ENCODE measurements at regions of chr1 and their contacts with region 1.

Region 1: DNA sequence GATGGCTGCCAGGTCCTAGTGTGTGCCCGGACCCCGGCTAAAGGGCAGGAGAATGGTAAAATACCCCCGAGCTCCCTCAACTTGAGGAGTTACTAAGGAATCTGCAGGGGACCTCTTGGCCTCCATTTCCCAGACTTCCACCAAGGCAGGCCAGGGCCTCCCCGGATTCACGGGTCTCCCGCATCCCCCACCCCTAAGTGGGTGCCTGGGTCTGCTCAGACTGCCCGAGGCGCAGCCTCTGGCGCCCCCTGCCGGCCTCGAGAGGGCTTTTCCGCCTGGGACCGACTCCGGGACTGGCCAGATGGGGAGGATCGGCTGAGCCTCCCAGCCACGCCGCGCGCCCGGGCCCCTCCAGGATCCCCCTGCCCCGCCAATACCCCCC is 1.7 kb downstream of the PLEKHG5 start:
- DNase-seq: peak; percentile 15
- ATAC-seq: peak; percentile 86
- H3K4me3 ChIP-seq: peak overlapping the region; percentile 89
- H3K27ac ChIP-seq: peak overlapping the region; percentile 69
- H3K4me1 ChIP-seq: no peaks in the 10 kb centered on the region
- H3K27me3 ChIP-seq: peaks cover 0 to under 1% of the 10 kb centered on the region in 2 experiments; a peak in 3 of 4 replicates
- CTCF ChIP-seq: peak; percentile 88 to 97 (median 94)
- EP300 ChIP-seq: no peak
- POLR2A ChIP-seq: no peak
- RAD21 ChIP-seq: peak; percentile 55

Region 2: GRCh38 chr1:6475381-6476133 is 14.2 kb before region 1 on chr1:
- CTCF ChIA-PET with region 1: interaction called, 17 read pairs
- POLR2A ChIA-PET with region 1: interaction called, 5 read pairs
- RAD21 ChIA-PET with region 1: interaction called, 3 read pairs
- SMC1A ChIA-PET with region 1: no interaction called
- in situ Hi-C with region 1: no loop called
- intact Hi-C with region 1: no loop called
- DNase-seq: no peak
- ATAC-seq: peak; percentile 97
- H3K4me3 ChIP-seq: no peak overlapping the region
- H3K27ac ChIP-seq: no peak overlapping the region
- H3K4me1 ChIP-seq: no peaks in the 10 kb centered on the region
- H3K27me3 ChIP-seq: no peaks in the 10 kb centered on the region
- CTCF ChIP-seq: peak; percentile 86 to 95 (median 94)
- EP300 ChIP-seq: no peak
- POLR2A ChIP-seq: no peak
- RAD21 ChIP-seq: peak; percentile 48

Region 3: GRCh38 chr1:6523566-6523965 is 33.8 kb after region 1 on chr1:
- CTCF ChIA-PET with region 1: interaction called, 24 read pairs
- POLR2A ChIA-PET with region 1: interaction called, 5 read pairs
- RAD21 ChIA-PET with region 1: no interaction called
- SMC1A ChIA-PET with region 1: interaction called, 3 read pairs
- in situ Hi-C with region 1: no loop called
- intact Hi-C with region 1: no loop called
- DNase-seq: no peak
- ATAC-seq: peak; percentile 71
- H3K4me3 ChIP-seq: no peak overlapping the region
- H3K27ac ChIP-seq: no peak overlapping the region
- H3K4me1 ChIP-seq: no peaks in the 10 kb centered on the region
- H3K27me3 ChIP-seq: no peaks in the 10 kb centered on the region
- CTCF ChIP-seq: peak; percentile 31 to 47 (median 35); a peak in 4 of 6 replicates
- EP300 ChIP-seq: no peak
- POLR2A ChIP-seq: no peak
- RAD21 ChIP-seq: 0 out of 2 replicates have a peak, but pooled peaks have one; percentile 23

Region 4: DNA sequence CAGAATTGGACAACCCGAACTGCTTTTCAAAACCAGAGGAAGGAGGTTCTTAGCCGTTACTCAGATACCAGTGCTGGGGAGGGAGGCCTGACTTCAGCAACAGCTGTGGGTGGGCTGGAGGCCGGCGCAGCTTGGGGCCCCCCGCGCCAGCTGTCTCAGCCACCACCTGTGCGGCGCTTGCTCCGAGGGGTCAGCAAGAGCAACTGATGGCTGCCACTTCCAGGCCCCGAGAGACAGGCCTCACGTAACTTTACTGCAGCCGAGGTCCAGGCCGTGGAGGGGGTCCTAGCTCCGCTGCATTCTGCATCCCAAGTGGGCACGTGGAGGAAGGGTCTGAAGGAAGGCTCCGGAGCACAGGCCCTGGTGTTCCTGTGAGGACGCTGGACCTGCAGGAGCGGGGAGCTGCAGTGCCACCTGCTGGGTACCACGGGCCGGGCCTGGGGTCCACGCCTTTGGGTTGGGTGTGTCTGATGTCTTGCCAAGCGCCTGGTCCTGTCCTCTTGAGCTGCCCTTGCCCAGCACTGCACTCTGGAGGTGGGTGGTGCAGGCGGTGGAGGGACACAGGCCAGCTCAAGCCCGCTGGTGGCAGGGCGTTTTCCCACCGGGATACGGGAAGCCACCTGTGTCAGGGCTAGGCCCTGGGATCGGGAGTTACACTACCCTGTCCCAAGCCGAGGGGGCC is 144.7 kb after region 1 on chr1:
- CTCF ChIA-PET with region 1: interaction called, 3 read pairs
- POLR2A ChIA-PET with region 1: no interaction called
- RAD21 ChIA-PET with region 1: no interaction called
- SMC1A ChIA-PET with region 1: no interaction called
- in situ Hi-C with region 1: loop called (anchors 5 kb)
- intact Hi-C with region 1: no loop called
- DNase-seq: no peak
- ATAC-seq: peak; percentile 76
- H3K4me3 ChIP-seq: no peak overlapping the region
- H3K27ac ChIP-seq: no peak overlapping the region
- H3K4me1 ChIP-seq: no peaks in the 10 kb centered on the region
- H3K27me3 ChIP-seq: no peaks in the 10 kb centered on the region
- CTCF ChIP-seq: peak; percentile 44 to 66 (median 45)
- EP300 ChIP-seq: no peak
- POLR2A ChIP-seq: 0 out of 2 replicates have a peak, but pooled peaks have one; percentile 51
- RAD21 ChIP-seq: peak; percentile 44; the same call in 1 of the 2 replicates

Region 5: DNA sequence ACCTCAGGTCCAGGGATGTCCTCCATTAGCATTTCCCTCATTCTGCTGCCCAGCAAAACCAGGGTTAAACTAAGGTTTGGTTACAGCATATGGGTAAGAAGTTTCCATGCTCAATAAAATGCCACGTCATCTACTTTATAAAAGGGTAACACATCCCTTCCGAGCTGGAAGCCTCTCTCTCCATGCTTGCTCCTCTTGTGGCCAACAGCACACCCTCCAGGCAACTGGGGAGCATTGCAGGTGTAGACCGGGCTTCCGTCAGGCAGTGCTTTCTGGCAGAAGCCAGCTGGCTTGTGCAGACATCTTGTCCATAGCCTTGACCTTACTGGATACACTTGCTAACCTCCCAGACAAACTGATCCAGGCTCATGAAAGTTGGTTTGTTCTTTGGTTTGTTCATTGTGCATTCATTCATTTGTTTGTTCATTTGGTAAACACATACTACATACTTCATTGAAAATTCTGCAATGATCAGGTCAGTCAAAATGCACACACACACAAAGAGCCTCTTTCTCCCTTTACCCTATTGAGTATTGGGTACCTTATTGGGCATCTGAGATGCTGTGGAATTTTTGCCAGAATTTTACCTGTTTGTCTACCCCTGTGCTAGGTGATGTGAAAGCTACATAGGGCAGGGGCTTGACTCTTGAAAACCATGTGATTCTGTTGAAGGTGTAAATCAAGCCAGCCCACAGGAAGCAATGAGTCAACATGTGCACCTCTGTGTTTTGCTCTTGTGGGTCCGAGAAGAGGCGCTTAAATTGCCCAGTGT is 718.3 kb after region 1 on chr1:
- CTCF ChIA-PET with region 1: no interaction called
- POLR2A ChIA-PET with region 1: no interaction called
- RAD21 ChIA-PET with region 1: no interaction called
- SMC1A ChIA-PET with region 1: no interaction called
- in situ Hi-C with region 1: loop called (anchors 25 kb)
- intact Hi-C with region 1: no loop called
- DNase-seq: no peak
- ATAC-seq: peak; percentile 72
- H3K4me3 ChIP-seq: no peak overlapping the region
- H3K27ac ChIP-seq: no peak overlapping the region
- H3K4me1 ChIP-seq: no peaks in the 10 kb centered on the region
- H3K27me3 ChIP-seq: no peaks in the 10 kb centered on the region; a peak in 1 of 4 replicates
- CTCF ChIP-seq: peak; percentile 55 to 73 (median 63)
- EP300 ChIP-seq: no peak
- POLR2A ChIP-seq: no peak
- RAD21 ChIP-seq: peak; percentile 56

Measured in GM12878 (cell line).